CD14-positive monocyte (primary cell): ENCODE measurements at regions of chr3 and their contacts with region 1.

Region 1: GRCh38 chr3:100073899-100074307 is 40.4 kb downstream of the FILIP1L start:
- DNase-seq: peak; percentile 33 to 81 (median 73)
- H3K4me3 ChIP-seq: peak overlapping the region in 2 of 3 experiments; percentile 31 to 69
- H3K4me3 Mint-ChIP-seq: peak overlapping the region; percentile 50 to 87
- H3K27ac ChIP-seq: peak overlapping the region; percentile 9 to 79
- H3K27ac Mint-ChIP-seq: peak overlapping the region; percentile 78 to 90 (median 87)
- H3K4me1 ChIP-seq: peaks cover 42 to 48% of the 10 kb centered on the region in 2 donors
- H3K4me1 Mint-ChIP-seq: peaks cover 60% of the 10 kb centered on the region
- H3K27me3 ChIP-seq: no peaks in the 10 kb centered on the region
- H3K27me3 Mint-ChIP-seq: no peaks in the 10 kb centered on the region
- CTCF ChIP-seq: no peak

Region 2: DNA sequence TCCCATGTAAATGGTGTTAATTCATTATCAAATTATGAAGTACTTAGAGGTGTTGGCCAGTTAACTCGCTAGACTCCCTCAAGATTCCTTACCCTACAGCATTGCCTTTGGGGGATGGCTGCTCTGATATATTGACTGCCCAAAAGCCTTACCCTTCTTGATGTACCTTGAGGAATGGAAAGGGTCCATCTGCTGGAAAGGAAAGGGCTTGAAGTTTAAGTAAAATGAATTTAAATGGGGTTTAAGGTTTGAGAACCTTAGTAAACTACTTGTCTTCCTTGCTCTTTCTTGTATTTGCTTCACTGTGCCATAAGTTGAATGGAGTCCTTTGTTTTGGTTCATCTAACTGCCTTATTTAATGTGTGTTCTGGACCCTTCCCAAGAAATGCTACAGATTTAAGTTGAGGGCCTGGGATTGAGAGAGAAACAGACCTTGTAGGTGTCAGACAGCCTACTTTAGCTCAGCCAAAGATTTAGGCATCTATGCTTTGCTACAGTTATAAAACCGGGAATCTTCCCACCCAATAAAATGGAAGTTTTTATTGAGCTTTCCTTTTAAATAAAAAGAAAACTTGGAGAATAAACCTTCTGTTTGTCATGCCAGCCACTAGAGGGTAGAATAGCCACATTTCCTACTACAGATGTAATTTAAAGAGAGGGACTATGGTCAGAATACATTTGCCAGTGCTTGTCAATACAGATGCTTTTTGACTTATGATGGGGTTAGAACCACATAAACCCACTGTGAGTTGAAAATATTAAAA is 230.9 kb before region 1 on chr3:
- intact Hi-C with region 1: loop called in 1 of 2 experiments (anchors 10 kb)
- DNase-seq: peak; percentile 6 to 21 (median 10)
- H3K4me3 ChIP-seq: no peak overlapping the region
- H3K4me3 Mint-ChIP-seq: no peak overlapping the region
- H3K27ac ChIP-seq: no peak overlapping the region
- H3K27ac Mint-ChIP-seq: no peak overlapping the region
- H3K4me1 ChIP-seq: peaks cover 9 to 10% of the 10 kb centered on the region in 2 donors
- H3K4me1 Mint-ChIP-seq: peaks cover 12% of the 10 kb centered on the region
- H3K27me3 ChIP-seq: no peaks in the 10 kb centered on the region
- H3K27me3 Mint-ChIP-seq: peaks cover 0 to 1% (median 0%) of the 10 kb centered on the region in 3 donors
- CTCF ChIP-seq: peak; percentile 64

Region 3: GRCh38 chr3:100175637-100176280 is 101.9 kb after region 1 on chr3:
- intact Hi-C with region 1: no loop called
- DNase-seq: no peak
- H3K4me3 ChIP-seq: no peak overlapping the region
- H3K4me3 Mint-ChIP-seq: no peak overlapping the region
- H3K27ac ChIP-seq: no peak overlapping the region
- H3K27ac Mint-ChIP-seq: peak overlapping the region in 1 of 7 donors; percentile 7
- H3K4me1 ChIP-seq: no peaks in the 10 kb centered on the region
- H3K4me1 Mint-ChIP-seq: peaks cover 2% of the 10 kb centered on the region
- H3K27me3 ChIP-seq: no peaks in the 10 kb centered on the region
- H3K27me3 Mint-ChIP-seq: peaks cover 0 to 1% (median 0%) of the 10 kb centered on the region in 3 donors
- CTCF ChIP-seq: no peak